Activated CD8-positive, alpha-beta T cell treated with anti-CD3 and anti-CD28 coated beads for 36 hours (primary cell): ENCODE measurements at regions of chr14 and their contacts with region 1.

Region 1: GRCh38 chr14:51780006-51780692 is 80.3 kb upstream of the GNG2 start:
- DNase-seq: peak; percentile 88
- ATAC-seq: peak; percentile 70
- H3K4me3 Mint-ChIP-seq: no peak overlapping the region
- H3K27ac Mint-ChIP-seq: no peak overlapping the region
- H3K4me1 Mint-ChIP-seq: peaks cover 25% of the 10 kb centered on the region
- H3K27me3 Mint-ChIP-seq: peaks cover 2% of the 10 kb centered on the region
- CTCF ChIP-seq: peak; percentile 93

Region 2: DNA sequence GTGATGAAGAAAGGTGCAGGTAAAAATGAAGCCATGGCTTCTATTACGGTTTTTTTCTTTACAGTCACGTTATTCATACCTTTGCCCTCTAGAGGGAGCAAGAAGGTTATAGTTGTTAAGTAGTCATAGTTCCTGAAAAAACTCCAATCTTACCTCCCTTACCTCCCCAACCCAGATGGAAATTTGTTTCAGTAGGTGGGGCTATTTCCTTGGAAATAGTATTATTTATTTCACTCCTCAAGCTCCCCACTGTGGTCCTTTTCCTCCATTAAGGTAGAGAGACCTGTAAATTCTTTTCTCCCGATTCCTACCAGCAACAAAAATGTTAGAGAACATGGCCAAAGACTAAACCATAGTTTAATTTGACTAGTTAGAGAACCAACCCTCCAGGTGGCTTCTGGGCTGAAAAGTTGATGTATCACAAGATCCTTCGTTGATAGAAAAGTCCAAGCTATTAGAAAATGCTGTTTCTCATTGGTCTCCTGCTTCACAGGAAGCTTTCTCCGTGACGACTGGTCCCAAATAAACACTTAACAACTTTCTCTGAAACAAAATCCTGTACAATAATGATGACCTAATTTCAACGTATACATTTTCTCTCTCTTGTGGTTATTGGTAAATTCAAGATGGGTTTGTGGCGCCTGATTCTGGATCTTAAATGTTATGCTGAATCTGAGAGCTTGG is 496.6 kb before region 1 on chr14:
- CTCF ChIA-PET with region 1: interaction called, 27 read pairs
- POLR2A ChIA-PET with region 1: no interaction called
- intact Hi-C with region 1: loop called (anchors 5 kb)
- DNase-seq: no peak
- ATAC-seq: no peak
- H3K4me3 Mint-ChIP-seq: no peak overlapping the region
- H3K27ac Mint-ChIP-seq: no peak overlapping the region
- H3K4me1 Mint-ChIP-seq: no peaks in the 10 kb centered on the region
- H3K27me3 Mint-ChIP-seq: no peaks in the 10 kb centered on the region
- CTCF ChIP-seq: peak; percentile 78

Region 3: GRCh38 chr14:51369814-51370213 is 410.3 kb before region 1 on chr14:
- CTCF ChIA-PET with region 1: interaction called, 7 read pairs
- POLR2A ChIA-PET with region 1: no interaction called
- intact Hi-C with region 1: loop called (anchors 5 kb)
- DNase-seq: peak; percentile 39
- ATAC-seq: no peak
- H3K4me3 Mint-ChIP-seq: no peak overlapping the region
- H3K27ac Mint-ChIP-seq: no peak overlapping the region
- H3K4me1 Mint-ChIP-seq: no peaks in the 10 kb centered on the region
- H3K27me3 Mint-ChIP-seq: peaks cover 8% of the 10 kb centered on the region
- CTCF ChIP-seq: peak; percentile 70

Region 4: DNA sequence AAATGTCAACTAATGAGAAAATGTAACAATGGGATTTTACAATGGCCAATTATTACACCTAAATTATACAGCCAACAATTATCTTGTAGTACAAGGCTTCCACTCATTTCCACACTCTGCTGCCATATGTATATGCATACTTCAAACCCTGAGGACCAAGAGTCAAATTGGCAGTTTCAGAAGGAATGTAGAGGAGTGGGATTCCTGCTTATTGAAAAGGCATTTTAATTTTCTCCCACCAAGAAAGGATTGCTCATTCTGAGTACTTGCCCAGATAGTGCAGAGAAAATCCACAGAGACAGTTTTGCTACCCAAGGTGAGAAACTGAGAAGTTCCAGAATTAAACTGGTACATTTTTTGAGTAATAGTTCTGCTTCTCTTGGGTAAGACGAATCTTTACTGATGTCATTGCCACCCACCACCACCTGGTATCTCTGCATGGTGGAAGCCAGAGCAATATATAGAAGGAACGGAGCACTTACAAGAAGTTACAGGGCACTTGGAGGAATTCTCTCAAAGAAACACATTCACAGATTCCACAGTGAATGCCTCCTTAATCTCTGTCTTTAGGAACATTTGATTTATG is 149.3 kb before region 1 on chr14:
- CTCF ChIA-PET with region 1: no interaction called
- POLR2A ChIA-PET with region 1: no interaction called
- intact Hi-C with region 1: no loop called
- DNase-seq: no peak
- ATAC-seq: peak; percentile 47
- H3K4me3 Mint-ChIP-seq: no peak overlapping the region
- H3K27ac Mint-ChIP-seq: no peak overlapping the region
- H3K4me1 Mint-ChIP-seq: peaks cover 2% of the 10 kb centered on the region
- H3K27me3 Mint-ChIP-seq: peaks cover 13% of the 10 kb centered on the region
- CTCF ChIP-seq: no peak

Region 5: GRCh38 chr14:51651388-51652167 is 128.6 kb before region 1 on chr14 and contains the start of gene FRMD6:
- CTCF ChIA-PET with region 1: interaction called, 27 read pairs
- POLR2A ChIA-PET with region 1: no interaction called
- intact Hi-C with region 1: no loop called
- DNase-seq: peak; percentile 82
- ATAC-seq: peak; percentile 88
- H3K4me3 Mint-ChIP-seq: peak within 1 kb of the TSS; percentile 80
- H3K27ac Mint-ChIP-seq: peak within 1 kb of the TSS; percentile 79
- H3K4me1 Mint-ChIP-seq: peaks cover 23% of the 10 kb centered on the region
- H3K27me3 Mint-ChIP-seq: peaks cover 21% of the 10 kb centered on the region
- CTCF ChIP-seq: peak; percentile 80
- total RNA-seq, gene FRMD6: 2.7 to 4.9 TPM

Region 6: GRCh38 chr14:51828017-51828797 is 48.1 kb after region 1 on chr14:
- CTCF ChIA-PET with region 1: interaction called, 10 read pairs
- POLR2A ChIA-PET with region 1: no interaction called
- intact Hi-C with region 1: no loop called
- DNase-seq: peak; percentile 83
- ATAC-seq: peak; percentile 98
- H3K4me3 Mint-ChIP-seq: no peak overlapping the region
- H3K27ac Mint-ChIP-seq: no peak overlapping the region
- H3K4me1 Mint-ChIP-seq: no peaks in the 10 kb centered on the region
- H3K27me3 Mint-ChIP-seq: no peaks in the 10 kb centered on the region
- CTCF ChIP-seq: no peak